ENCODE measurements at regions of chr4 and their contacts with region 1.

Region 1: GRCh38 chr4:99205153-99205979 is 13.7 kb downstream of the ADH6 start:
- DNase-seq: peak; percentile 83
- ATAC-seq: peak; percentile 92
- H3K4me3 ChIP-seq: no peak overlapping the region
- H3K27ac ChIP-seq: peak overlapping the region; percentile 66
- H3K4me1 ChIP-seq: peaks cover 59% of the 10 kb centered on the region
- H3K27me3 ChIP-seq: no peaks in the 10 kb centered on the region
- CTCF ChIP-seq: no peak
- EP300 ChIP-seq: peak in 1 of 2 experiments; percentile 50; a peak in 1 of 4 replicates
- POLR2A ChIP-seq: no peak
- RAD21 ChIP-seq: no peak

Region 2: DNA sequence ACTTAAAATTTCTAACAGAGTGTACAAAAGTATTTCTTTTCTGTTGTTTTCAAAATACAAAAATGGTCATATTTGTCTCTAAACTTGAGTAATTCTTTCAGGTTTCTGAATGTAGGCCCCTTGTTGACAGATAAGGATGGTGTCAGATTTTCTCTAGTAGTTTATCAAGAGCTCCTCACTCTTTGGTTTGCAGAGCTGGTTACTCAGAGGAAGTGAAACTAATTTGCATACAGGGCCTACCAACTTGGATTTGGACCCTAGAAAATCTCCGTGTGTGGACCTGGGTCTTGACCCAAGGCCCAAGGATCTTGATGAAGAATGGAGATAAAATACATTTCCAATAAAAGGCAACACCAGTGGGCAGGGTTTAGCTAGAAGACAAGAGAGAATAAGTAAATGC is 14.1 kb after region 1 on chr4:
- CTCF ChIA-PET with region 1: no interaction called
- POLR2A ChIA-PET with region 1: interaction called, 8 read pairs
- in situ Hi-C with region 1: no loop called
- intact Hi-C with region 1: loop called (anchors 2 kb)
- DNase-seq: peak; percentile 23
- ATAC-seq: peak; percentile 55
- H3K4me3 ChIP-seq: peak overlapping the region; percentile 26 to 81 (median 71); a peak in 5 of 6 replicates
- H3K27ac ChIP-seq: peak overlapping the region; percentile 69
- H3K4me1 ChIP-seq: peaks cover 41% of the 10 kb centered on the region
- H3K27me3 ChIP-seq: no peaks in the 10 kb centered on the region; a peak in 1 of 5 replicates
- CTCF ChIP-seq: no peak
- EP300 ChIP-seq: no peak
- POLR2A ChIP-seq: no peak
- RAD21 ChIP-seq: no peak

Region 3: GRCh38 chr4:99324979-99325378 is 119.6 kb after region 1 on chr4:
- CTCF ChIA-PET with region 1: no interaction called
- POLR2A ChIA-PET with region 1: no interaction called
- in situ Hi-C with region 1: no loop called
- intact Hi-C with region 1: no loop called
- DNase-seq: no peak
- ATAC-seq: no peak
- H3K4me3 ChIP-seq: no peak overlapping the region
- H3K27ac ChIP-seq: no peak overlapping the region
- H3K4me1 ChIP-seq: 0 out of 2 replicates have a peak, but pooled peaks cover 7% of the 10 kb centered on the region
- H3K27me3 ChIP-seq: no peaks in the 10 kb centered on the region
- CTCF ChIP-seq: no peak
- EP300 ChIP-seq: no peak
- POLR2A ChIP-seq: no peak
- RAD21 ChIP-seq: no peak

Region 4: DNA sequence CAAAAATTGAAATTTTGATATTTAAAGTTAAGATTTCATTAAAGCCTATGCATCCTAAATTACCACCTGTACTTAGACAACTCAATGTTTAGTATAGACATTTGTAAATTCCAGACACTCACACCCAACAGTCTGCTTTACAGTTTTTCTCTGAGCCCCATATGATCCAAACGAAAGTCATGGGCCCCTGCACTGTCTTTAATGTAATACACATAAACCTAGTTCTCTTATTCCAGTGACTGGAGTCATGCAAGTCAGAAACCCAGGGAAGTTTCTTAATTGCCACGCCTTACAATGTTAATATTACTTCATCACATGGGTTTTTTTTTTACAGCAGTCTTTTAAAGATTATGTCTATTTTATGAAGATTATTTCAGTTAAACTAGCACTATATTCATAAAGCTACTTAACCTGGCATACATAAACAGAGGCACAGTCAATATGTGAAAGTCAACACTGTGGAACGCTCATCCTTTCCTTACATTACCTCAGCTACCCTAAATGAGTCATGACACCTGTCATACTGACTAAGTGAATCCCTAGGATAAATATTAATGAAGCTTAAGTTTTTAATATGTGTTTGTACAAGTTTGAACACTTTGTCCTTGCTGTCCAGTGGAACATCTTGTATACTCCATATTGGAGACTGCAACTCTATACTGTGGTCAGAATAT is 812.4 kb after region 1 on chr4:
- CTCF ChIA-PET with region 1: no interaction called
- POLR2A ChIA-PET with region 1: no interaction called
- in situ Hi-C with region 1: no loop called
- intact Hi-C with region 1: no loop called
- DNase-seq: no peak
- ATAC-seq: no peak
- H3K4me3 ChIP-seq: no peak overlapping the region
- H3K27ac ChIP-seq: no peak overlapping the region
- H3K4me1 ChIP-seq: no peaks in the 10 kb centered on the region
- H3K27me3 ChIP-seq: no peaks in the 10 kb centered on the region; a peak in 1 of 5 replicates
- CTCF ChIP-seq: no peak
- EP300 ChIP-seq: no peak
- POLR2A ChIP-seq: no peak
- RAD21 ChIP-seq: no peak

Measured in HepG2 (cell line).